ENCODE measurements at regions of chr2 and their contacts with region 1.

Region 1: GRCh38 chr2:84925724-84926376 is 20.4 kb downstream of the TMSB10 start:
- DNase-seq: no peak
- H3K4me3 ChIP-seq: peak overlapping the region; percentile 58
- CTCF ChIP-seq: peak; percentile 93

Region 2: DNA sequence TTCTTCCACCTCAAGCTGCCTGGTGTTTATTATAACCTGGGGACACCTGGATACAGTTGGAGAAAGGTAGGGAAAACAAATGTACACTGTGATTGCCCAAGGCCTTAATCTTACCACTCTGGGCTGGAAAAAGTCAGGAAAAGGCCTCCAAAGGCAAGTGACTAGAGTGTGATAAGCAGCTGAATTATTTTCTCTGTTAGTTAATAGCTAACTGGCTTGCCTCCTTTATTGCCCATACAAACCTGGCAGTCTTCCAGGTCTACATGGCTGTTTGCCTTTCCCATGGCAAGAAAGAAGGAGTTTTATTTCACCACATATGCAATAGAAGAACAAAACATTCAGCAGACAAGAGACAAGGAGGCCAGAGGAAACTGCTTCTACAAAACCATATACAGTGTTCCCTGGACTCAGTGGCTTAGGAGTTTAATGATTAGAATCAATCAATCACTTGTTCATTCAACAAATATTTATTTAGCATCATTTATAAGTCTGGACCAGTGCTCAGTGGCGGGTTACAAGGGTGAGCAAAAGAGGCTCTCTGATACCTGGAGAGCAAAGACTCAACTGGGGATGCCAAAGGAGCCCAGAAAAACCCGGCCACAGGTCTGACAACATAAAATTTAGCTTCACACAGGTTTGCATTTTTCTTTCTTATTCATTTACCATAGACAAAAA is 439.3 kb before region 1 on chr2:
- CTCF ChIA-PET with region 1: interaction called, 53 read pairs
- POLR2A ChIA-PET with region 1: no interaction called
- DNase-seq: no peak
- H3K4me3 ChIP-seq: no peak overlapping the region
- CTCF ChIP-seq: no peak

Region 3: DNA sequence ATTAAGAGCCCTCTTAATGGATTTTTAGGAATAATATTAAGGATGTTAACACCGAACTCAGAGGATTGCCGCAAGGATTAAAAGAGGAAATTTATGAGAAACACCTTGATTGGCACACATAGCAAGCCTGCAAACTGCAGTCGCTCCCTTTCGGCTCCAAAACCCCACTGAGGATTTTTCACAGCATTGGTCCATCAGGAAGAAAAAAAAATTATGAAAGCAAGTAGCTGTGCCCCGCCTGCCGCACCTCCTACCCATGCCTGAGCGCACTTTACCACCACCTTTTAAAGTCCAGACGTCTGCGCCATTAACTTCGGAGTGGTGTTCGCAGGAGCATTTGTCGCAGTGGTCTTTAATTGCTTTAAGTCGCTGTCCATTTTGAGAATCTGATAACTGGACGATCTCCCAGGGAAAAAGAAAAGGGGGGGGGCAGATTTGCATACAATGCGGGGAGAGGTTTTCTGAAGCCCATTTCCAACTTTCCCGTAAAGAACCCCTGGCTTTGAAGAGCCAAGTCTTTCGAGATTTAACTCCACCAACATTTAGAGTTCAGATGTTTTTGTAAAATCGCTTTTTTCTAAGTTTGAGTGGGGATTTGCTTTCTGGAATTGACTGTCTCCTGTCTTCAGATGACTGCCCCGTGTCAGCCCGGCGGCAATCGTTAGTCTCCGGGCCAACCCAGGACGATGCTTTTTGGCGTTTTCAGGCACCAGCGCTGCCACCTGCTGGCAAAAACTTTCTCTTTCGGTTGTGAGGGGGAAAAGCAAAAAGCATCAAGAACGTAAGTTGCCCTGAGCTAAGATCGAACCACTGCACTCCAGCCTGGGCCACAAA is 44.1 kb before region 1 on chr2:
- CTCF ChIA-PET with region 1: interaction called, 41 read pairs
- POLR2A ChIA-PET with region 1: interaction called, 3 read pairs
- DNase-seq: no peak
- H3K4me3 ChIP-seq: peak overlapping the region; percentile 56
- CTCF ChIP-seq: peak; percentile 85

Region 4: DNA sequence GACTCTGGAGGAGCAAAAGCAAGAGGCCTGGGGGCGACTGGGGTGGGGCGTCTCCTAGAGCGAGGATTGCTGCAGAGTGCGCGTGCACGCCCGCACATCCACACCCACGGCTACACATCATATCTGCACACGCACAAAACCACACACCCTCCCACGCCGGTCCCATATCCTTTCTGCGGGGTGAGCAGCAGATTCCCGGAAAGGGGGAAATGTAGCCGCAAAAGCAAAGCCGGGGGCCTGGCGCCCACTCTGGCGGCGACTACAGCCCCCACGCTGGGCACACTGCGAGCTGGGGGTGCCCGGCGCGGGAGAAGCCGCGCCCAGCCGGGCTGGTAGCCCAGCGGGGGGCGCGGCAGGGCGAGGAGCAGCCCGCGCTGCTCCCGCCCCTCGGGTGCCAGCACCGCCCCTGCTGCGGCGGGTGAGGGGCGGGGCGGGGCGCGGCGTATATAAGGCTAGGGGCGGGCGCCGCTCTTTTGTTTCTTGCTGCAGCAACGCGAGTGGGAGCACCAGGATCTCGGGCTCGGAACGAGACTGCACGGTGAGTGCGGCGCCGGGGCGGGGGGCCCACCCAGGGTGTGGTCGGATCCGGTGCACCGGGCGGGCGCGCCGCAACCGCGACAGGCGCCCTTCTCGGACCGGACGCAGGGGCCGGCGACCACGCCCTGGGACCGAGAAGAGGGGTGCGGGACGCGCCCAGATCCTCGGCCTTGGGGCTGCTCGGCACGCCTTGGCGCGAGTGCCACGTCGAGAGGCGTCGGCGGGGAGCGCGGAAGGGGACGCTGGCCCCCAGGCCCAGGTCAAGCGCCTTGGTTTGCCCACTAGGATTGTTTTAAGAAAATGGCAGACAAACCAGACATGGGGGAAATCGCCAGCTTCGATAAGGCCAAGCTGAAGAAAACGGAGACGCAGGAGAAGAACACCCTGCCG is 20.4 kb before region 1 on chr2 and contains the start of gene TMSB10:
- CTCF ChIA-PET with region 1: interaction called, 50 read pairs
- POLR2A ChIA-PET with region 1: interaction called, 71 read pairs
- DNase-seq: no peak
- H3K4me3 ChIP-seq: peak within 1 kb of the TSS; percentile 86
- CTCF ChIP-seq: no peak

Region 5: GRCh38 chr2:84946204-84947009 is 20.6 kb after region 1 on chr2:
- CTCF ChIA-PET with region 1: interaction called, 125 read pairs
- POLR2A ChIA-PET with region 1: interaction called, 5 read pairs
- DNase-seq: no peak
- H3K4me3 ChIP-seq: no peak overlapping the region
- CTCF ChIP-seq: no peak

Region 6: DNA sequence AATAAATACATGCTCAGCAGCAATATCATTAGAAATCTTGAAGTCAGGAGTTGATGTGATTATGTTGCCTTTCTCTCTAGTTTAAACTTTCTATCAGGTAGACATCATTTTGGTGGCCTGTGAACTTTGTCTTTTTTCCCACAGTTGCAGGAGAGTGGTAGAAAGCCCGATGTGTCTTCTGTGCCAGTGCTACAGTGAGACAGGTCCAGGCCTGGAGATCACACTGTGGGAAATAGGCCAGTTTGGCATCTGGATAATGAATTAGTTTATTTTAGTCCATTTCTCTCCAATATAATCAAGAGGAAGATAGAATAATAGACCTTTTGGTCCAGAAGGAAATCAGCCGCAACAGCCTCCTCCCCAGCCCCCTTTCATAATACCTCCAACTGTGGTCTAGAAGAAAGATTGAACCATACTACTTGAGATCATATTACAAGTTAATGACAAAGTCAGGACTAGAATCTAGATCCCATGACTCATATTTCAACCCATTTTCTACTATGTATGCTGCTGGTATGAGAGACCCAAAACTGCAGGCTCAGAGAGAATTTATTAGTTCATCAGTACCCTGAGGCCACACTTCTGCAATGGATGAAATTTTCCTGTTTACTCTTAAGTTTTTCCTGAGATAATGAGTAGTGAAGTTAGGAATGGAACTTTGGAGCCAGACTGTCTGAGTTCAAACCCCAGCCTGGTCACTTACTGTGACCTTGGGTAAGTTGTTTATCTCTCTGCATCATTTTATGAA is 65.7 kb after region 1 on chr2:
- CTCF ChIA-PET with region 1: interaction called, 11 read pairs
- POLR2A ChIA-PET with region 1: no interaction called
- DNase-seq: peak; percentile 79
- H3K4me3 ChIP-seq: no peak overlapping the region
- CTCF ChIP-seq: no peak